CD8-positive, alpha-beta T cell (primary cell): ENCODE measurements at regions of chr11 and their contacts with region 1.

Region 1: GRCh38 chr11:1628506-1629325 is 859 bp upstream of the KRTAP5-5 start:
- DNase-seq: peak; percentile 27 to 75 (median 62)
- ATAC-seq: peak; percentile 93
- H3K4me3 ChIP-seq: no peak overlapping the region
- H3K4me3 Mint-ChIP-seq: no peak overlapping the region
- H3K27ac ChIP-seq: no peak overlapping the region
- H3K27ac Mint-ChIP-seq: no peak overlapping the region
- H3K4me1 ChIP-seq: peaks cover 12% of the 10 kb centered on the region
- H3K4me1 Mint-ChIP-seq: peaks cover 6% of the 10 kb centered on the region
- H3K27me3 ChIP-seq: peaks cover 6 to 10% of the 10 kb centered on the region in 2 experiments
- H3K27me3 Mint-ChIP-seq: peaks cover 30% of the 10 kb centered on the region
- CTCF ChIP-seq: peak; percentile 89

Region 2: GRCh38 chr11:1202776-1203504 is 425.8 kb before region 1 on chr11:
- CTCF ChIA-PET with region 1: no interaction called
- POLR2A ChIA-PET with region 1: no interaction called
- intact Hi-C with region 1: loop called in 1 of 2 experiments (anchors 10 kb)
- DNase-seq: peak; percentile 34 to 78 (median 60)
- ATAC-seq: peak; percentile 87
- H3K4me3 ChIP-seq: no peak overlapping the region
- H3K4me3 Mint-ChIP-seq: no peak overlapping the region
- H3K27ac ChIP-seq: no peak overlapping the region
- H3K27ac Mint-ChIP-seq: no peak overlapping the region
- H3K4me1 ChIP-seq: no peaks in the 10 kb centered on the region
- H3K4me1 Mint-ChIP-seq: no peaks in the 10 kb centered on the region
- H3K27me3 ChIP-seq: peaks cover 0 to 2% of the 10 kb centered on the region in 2 experiments
- H3K27me3 Mint-ChIP-seq: peaks cover 2% of the 10 kb centered on the region
- CTCF ChIP-seq: peak; percentile 88

Region 3: DNA sequence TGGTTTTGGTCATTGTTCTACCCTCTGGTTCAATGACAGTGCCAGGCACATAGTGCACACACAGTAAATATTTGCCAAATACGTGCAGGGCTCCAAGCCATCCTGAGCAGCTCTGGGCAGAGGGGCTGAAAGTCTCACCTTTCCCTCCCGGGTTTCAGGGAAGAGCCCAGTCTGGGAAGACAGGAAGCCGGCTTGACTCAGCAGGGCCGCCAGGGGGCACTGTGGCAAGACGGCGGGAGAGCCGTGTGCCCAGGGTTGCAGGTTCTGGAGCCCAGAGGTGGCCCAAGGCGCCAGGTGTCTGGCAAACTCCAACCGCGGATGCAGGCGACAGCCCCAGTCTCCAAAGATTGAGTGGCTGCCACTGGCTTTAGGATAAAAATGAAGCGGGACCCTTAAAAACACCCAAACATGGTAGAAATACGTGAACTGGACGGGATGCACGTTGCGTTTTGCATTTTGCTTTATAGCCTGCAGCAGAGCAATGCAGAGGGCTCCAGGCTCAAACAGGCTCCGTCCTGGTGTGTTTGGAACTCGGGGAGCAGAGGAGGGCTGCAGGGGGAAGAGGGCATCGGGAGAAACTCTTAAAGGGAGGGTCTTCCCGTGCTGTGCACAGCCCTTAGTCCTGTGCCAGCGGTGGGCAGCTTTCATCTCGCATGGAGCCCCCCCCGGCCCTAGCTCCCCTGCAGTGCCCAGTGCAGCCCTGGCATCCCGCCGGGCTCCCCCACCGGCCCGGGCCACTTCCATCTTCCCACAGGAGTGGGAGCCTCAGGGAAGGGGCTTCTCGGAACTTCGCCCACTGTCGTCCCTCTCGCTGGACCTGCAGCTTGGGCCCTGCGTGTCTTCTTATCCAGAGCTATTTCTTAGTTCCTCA is 11.6 kb after region 1 on chr11:
- CTCF ChIA-PET with region 1: interaction called, 30 read pairs
- POLR2A ChIA-PET with region 1: interaction called, 4 read pairs
- intact Hi-C with region 1: no loop called
- DNase-seq: peak in 6 of 9 experiments; percentile 9 to 59 (median 32)
- ATAC-seq: no peak
- H3K4me3 ChIP-seq: no peak overlapping the region
- H3K4me3 Mint-ChIP-seq: no peak overlapping the region
- H3K27ac ChIP-seq: no peak overlapping the region
- H3K27ac Mint-ChIP-seq: no peak overlapping the region
- H3K4me1 ChIP-seq: no peaks in the 10 kb centered on the region
- H3K4me1 Mint-ChIP-seq: no peaks in the 10 kb centered on the region
- H3K27me3 ChIP-seq: peaks cover 0 to 2% of the 10 kb centered on the region in 2 experiments
- H3K27me3 Mint-ChIP-seq: peaks cover 24% of the 10 kb centered on the region
- CTCF ChIP-seq: peak; percentile 77